GM10248 (cell line): ENCODE measurements at regions of chr1 and their contacts with region 1.

Region 1: GRCh38 chr1:207963427-207964194 is 52.7 kb upstream of the CD34 start:
- DNase-seq: peak; percentile 97
- CTCF ChIP-seq: peak; percentile 98

Region 2: GRCh38 chr1:207868774-207869721 is 94.6 kb before region 1 on chr1:
- CTCF ChIA-PET with region 1: interaction called, 36 read pairs
- POLR2A ChIA-PET with region 1: no interaction called
- DNase-seq: peak; percentile 89
- CTCF ChIP-seq: peak; percentile 95

Region 3: DNA sequence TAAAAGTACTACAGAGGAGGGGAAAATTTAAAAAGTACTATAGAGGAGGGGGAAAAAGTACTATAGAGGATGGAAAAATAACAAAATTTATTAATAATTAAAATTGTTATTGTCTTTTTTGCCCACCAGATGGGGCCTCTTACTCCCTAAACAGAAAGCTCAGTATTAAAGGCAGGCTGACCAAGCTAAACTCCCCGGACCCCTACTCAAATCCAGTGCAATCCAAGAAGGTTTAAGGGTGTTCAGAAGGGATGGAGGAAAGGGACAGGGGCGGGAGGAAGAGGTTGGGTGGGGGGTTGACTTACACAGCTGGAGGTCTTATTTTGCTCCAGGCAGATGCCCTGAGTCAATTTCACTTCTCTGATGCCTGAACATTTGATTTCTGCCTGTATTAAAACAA is 66.4 kb before region 1 on chr1:
- CTCF ChIA-PET with region 1: interaction called, 243 read pairs
- POLR2A ChIA-PET with region 1: no interaction called
- DNase-seq: no peak
- CTCF ChIP-seq: no peak

Region 4: GRCh38 chr1:207935166-207935583 is 28.4 kb before region 1 on chr1:
- CTCF ChIA-PET with region 1: interaction called, 15 read pairs
- POLR2A ChIA-PET with region 1: no interaction called
- DNase-seq: no peak
- CTCF ChIP-seq: no peak

Region 5: DNA sequence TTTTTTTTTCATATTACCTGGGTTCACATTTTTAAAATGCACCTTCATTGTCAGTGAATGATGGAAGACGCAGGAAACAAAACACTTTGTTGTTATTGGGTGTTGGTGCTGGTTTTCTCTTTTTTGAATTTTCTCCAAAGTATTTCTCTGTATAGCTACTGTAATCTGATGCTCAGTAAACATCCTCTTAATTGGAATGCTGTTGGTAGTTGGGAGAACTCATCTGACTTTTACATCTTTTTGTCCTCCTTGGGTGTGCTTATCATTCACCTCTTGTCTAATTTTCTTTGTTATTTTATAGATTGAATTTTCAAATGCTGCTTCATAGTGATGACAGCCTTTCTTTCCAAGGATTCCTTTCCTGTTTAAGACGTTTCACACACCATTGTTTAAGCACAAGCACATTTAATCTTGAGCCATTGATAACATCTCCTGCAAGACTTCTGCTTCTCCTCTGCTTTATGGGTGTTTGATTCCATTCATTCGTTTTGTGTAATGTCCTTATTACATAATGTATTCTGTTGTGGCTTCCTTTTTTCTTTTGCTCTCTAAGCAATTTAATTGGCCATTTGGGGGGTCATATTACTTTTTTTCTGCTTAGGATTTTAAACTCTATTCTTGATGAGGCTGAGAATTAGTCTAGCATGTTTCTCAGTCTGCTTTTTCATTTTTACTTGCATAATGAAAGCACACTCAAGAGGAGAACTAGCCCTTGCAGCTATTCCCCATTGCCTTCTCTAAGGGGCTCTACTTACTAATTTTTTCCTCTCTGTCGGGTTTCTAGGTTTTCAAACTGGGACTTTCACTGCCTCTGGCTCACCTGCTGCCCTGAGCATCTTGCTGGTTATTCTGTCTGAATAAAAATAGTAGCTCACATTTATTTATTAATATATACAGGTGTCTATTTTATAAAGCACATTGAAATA is 10.7 kb before region 1 on chr1:
- CTCF ChIA-PET with region 1: interaction called, 56 read pairs
- POLR2A ChIA-PET with region 1: interaction called, 3 read pairs
- DNase-seq: peak; percentile 26
- CTCF ChIP-seq: no peak